A673 (cell line): ENCODE measurements at regions of chr2 and their contacts with region 1.

Region 1: GRCh38 chr2:163044114-163044513 is 205.5 kb upstream of the KCNH7 start:
- DNase-seq: no peak
- H3K4me3 ChIP-seq: no peak overlapping the region
- H3K27ac ChIP-seq: no peak overlapping the region
- H3K4me1 ChIP-seq: no peaks in the 10 kb centered on the region
- H3K27me3 ChIP-seq: no peaks in the 10 kb centered on the region
- CTCF ChIP-seq: no peak

Region 2: DNA sequence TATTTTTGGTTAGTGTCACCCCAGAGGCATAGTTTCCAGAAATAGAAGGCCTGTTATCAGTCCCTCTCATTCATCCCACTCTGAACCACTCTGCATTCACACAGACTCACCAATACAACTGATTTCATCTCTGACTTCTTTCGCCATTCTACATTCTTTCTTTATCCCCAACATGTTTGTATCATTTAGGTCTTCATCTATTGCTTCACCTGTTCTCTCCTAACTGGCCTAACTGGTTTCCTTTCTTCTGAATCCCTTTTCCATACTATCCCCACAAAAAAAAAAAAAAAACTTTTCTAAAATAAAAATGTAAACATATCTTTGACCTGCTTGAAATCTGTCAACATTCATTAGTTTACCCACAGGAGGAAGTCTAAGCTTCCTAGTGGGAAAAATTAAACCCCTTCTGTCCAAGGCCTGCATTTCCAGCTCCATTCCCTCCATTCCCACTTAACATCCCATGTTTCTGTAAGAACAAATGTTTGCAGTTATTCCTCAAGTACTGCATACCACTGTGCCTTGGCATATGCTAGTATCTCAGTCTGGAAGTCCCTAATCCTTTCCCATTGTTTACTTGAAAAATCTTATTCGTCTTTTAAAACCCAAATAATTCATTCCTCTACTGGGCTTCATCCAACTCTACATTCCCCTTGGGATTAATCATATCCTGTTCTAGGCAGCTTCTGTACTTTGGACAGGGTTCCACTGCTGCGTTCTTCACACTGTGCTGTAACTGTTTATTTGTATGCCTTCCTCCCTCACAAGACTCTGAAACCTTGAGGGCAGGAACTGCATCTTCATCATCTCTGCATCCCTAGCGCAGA is 623.2 kb after region 1 on chr2:
- CTCF ChIA-PET with region 1: no interaction called
- POLR2A ChIA-PET with region 1: interaction called, 13 read pairs
- intact Hi-C with region 1: no loop called
- DNase-seq: peak; percentile 12
- H3K4me3 ChIP-seq: no peak overlapping the region
- H3K27ac ChIP-seq: no peak overlapping the region
- H3K4me1 ChIP-seq: no peaks in the 10 kb centered on the region
- H3K27me3 ChIP-seq: peaks cover 9% of the 10 kb centered on the region
- CTCF ChIP-seq: no peak